ENCODE measurements at regions of chr14 and their contacts with region 1.

Region 1: GRCh38 chr14:24734878-24735500 is 101.0 kb upstream of the GZMB start:
- DNase-seq: peak; percentile 28 to 64 (median 38)
- ATAC-seq: peak; percentile 76
- H3K4me3 ChIP-seq: no peak overlapping the region
- H3K27ac ChIP-seq: no peak overlapping the region
- H3K4me1 ChIP-seq: no peaks in the 10 kb centered on the region
- H3K27me3 ChIP-seq: no peaks in the 10 kb centered on the region
- CTCF ChIP-seq: peak; percentile 41 to 67 (median 61); a peak in 5 of 6 replicates
- EP300 ChIP-seq: no peak
- POLR2A ChIP-seq: no peak
- RAD21 ChIP-seq: peak; percentile 51 to 67; a peak in 3 of 4 replicates

Region 2: DNA sequence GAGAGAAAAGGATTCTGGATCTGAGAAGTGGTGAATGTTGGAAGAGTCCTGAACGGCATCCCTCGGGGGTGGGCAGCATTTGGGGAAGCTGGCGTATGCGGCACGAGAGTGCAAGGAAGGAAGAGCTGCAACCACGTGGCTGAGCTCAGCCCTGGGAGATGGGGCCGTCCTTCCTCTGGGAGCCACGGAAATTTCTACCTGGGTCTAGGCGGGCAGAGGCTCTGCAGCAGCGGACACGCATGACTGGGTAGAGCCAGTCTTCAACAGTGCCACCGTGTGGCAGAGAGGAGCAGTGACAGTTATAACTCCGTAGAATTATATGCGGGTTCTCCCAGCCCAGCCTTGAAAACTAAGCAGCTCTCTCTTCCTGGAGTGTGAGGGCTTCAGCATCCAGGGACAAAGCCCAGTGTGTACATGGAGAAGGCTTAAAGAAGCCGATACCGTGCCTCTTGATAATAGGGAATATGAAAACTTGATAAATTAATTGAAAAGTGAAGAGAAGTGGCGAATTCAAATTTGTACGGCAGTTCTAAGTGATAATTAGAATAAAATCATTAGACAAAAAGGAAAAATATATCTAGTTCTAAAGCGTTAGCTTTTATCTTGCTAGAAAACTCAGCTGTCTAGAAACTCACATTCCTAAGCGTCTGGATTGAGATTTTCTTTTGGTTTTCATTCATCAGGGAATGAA is 397.9 kb after region 1 on chr14:
- CTCF ChIA-PET with region 1: interaction called, 3 read pairs
- POLR2A ChIA-PET with region 1: no interaction called
- in situ Hi-C with region 1: loop called (anchors 25 kb)
- intact Hi-C with region 1: no loop called
- DNase-seq: peak; percentile 41 to 61 (median 42)
- ATAC-seq: peak; percentile 95
- H3K4me3 ChIP-seq: no peak overlapping the region
- H3K27ac ChIP-seq: no peak overlapping the region
- H3K4me1 ChIP-seq: no peaks in the 10 kb centered on the region
- H3K27me3 ChIP-seq: no peaks in the 10 kb centered on the region
- CTCF ChIP-seq: peak; percentile 46 to 67 (median 55)
- EP300 ChIP-seq: no peak
- POLR2A ChIP-seq: no peak
- RAD21 ChIP-seq: peak; percentile 42 to 64; a peak in 3 of 4 replicates

Region 3: GRCh38 chr14:25150934-25151790 is 416.2 kb after region 1 on chr14:
- CTCF ChIA-PET with region 1: no interaction called
- POLR2A ChIA-PET with region 1: interaction called, 3 read pairs
- in situ Hi-C with region 1: loop called (anchors 25 kb)
- intact Hi-C with region 1: loop called (anchors 5 kb)
- DNase-seq: peak; percentile 18 to 31 (median 28)
- ATAC-seq: no peak
- H3K4me3 ChIP-seq: no peak overlapping the region
- H3K27ac ChIP-seq: no peak overlapping the region
- H3K4me1 ChIP-seq: no peaks in the 10 kb centered on the region
- H3K27me3 ChIP-seq: no peaks in the 10 kb centered on the region
- CTCF ChIP-seq: peak; percentile 29 to 64 (median 40); a peak in 5 of 6 replicates
- EP300 ChIP-seq: no peak
- POLR2A ChIP-seq: no peak
- RAD21 ChIP-seq: peak; percentile 53 to 58

Region 4: GRCh38 chr14:25537846-25538455 is 803.0 kb after region 1 on chr14:
- CTCF ChIA-PET with region 1: no interaction called
- POLR2A ChIA-PET with region 1: no interaction called
- in situ Hi-C with region 1: no loop called
- intact Hi-C with region 1: loop called (anchors 10 kb)
- DNase-seq: peak; percentile 14 to 29 (median 22)
- ATAC-seq: no peak
- H3K4me3 ChIP-seq: no peak overlapping the region
- H3K27ac ChIP-seq: no peak overlapping the region
- H3K4me1 ChIP-seq: no peaks in the 10 kb centered on the region
- H3K27me3 ChIP-seq: no peaks in the 10 kb centered on the region
- CTCF ChIP-seq: 0 out of 6 replicates have a peak, but pooled peaks of 2 of the 3 experiments have one; percentile 16 to 40
- EP300 ChIP-seq: no peak
- POLR2A ChIP-seq: no peak
- RAD21 ChIP-seq: peak in 1 of 2 experiments; percentile 28; a peak in 3 of 4 replicates

Measured in K562 (cell line).